Activated CD8-positive, alpha-beta T cell treated with anti-CD3 and anti-CD28 coated beads for 36 hours (primary cell): ENCODE measurements at regions of chr3 and their contacts with region 1.

Region 1: DNA sequence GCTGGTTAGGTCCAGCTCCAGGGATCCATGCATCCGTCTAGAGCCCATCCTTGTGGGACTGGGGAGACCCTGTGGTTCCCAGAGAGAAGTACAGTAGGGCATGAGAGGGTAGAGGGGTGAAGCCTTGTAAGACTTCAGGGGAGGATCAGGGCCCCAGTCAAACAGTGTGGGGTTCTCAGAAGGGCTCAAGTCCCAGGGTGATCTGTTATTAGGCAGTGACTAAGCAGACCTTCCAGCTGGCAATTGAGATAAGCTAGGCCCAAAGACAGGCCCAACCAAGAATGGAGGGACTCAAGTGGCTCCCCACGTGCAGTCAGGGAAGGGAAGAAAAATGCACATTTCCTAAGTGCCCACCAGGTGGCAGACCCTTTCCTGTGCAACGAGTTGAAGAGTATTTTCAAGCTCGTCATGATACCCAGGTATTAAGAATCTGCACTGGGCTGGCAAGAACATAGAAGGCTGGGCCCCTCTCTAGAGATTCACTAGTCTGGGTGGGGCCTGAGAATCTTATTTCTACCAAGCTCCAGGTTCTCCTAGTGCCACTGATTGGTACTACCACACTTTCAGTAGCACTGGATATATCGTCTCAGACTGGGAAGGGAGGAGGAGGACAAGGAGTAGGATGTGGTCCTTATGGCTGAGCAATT is 240.8 kb downstream of the NR1D2 start:
- DNase-seq: peak; percentile 49
- ATAC-seq: peak; percentile 86
- H3K4me3 Mint-ChIP-seq: no peak overlapping the region
- H3K27ac Mint-ChIP-seq: no peak overlapping the region
- H3K4me1 Mint-ChIP-seq: no peaks in the 10 kb centered on the region
- H3K27me3 Mint-ChIP-seq: peaks cover 2% of the 10 kb centered on the region
- CTCF ChIP-seq: peak; percentile 72

Region 2: DNA sequence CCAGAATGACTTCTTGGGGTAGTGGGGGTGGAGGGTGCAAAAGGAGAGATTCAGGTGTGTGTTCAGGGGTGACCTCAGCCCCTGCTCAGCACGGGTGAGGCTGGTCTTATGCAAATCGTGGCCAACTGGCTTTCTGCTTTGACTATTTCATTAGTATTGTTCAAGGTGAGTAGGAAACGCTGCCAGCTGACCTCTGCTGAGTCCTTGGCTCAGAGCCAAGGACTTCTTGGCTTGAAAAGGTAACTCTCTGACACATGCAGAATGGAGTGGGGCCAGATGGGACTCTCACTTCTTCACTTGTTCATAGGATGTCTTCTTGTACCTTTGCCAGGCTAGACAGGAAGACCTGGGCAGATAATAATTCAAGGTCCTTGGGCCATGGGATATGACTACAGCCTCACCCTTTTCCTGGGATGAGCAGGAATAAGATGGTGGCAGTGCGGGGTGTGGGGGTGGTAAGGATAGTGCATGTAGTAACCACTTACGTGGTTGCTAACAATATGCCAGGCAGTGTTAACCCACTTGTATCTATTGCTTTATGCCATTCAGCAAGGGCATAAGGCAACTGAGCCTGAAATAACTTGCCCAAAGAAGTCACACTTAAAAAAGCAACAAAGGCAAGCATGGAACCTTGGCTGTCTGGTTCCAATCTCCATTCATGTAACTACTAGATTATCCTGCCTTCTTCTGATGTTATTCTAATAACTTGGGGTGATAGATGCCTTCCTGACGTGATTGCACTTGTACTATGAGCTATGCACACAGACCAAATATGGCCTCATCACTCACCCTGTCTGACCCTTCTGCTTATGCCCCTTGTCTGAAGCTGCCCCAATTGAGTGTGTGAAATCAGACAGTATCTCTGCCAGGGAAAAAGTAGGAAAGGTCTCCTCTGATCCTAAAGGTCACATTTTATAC is 47.6 kb before region 1 on chr3:
- CTCF ChIA-PET with region 1: no interaction called
- POLR2A ChIA-PET with region 1: no interaction called
- intact Hi-C with region 1: no loop called
- DNase-seq: no peak
- ATAC-seq: no peak
- H3K4me3 Mint-ChIP-seq: no peak overlapping the region
- H3K27ac Mint-ChIP-seq: no peak overlapping the region
- H3K4me1 Mint-ChIP-seq: peaks cover 2% of the 10 kb centered on the region
- H3K27me3 Mint-ChIP-seq: no peaks in the 10 kb centered on the region
- CTCF ChIP-seq: no peak

Region 3: DNA sequence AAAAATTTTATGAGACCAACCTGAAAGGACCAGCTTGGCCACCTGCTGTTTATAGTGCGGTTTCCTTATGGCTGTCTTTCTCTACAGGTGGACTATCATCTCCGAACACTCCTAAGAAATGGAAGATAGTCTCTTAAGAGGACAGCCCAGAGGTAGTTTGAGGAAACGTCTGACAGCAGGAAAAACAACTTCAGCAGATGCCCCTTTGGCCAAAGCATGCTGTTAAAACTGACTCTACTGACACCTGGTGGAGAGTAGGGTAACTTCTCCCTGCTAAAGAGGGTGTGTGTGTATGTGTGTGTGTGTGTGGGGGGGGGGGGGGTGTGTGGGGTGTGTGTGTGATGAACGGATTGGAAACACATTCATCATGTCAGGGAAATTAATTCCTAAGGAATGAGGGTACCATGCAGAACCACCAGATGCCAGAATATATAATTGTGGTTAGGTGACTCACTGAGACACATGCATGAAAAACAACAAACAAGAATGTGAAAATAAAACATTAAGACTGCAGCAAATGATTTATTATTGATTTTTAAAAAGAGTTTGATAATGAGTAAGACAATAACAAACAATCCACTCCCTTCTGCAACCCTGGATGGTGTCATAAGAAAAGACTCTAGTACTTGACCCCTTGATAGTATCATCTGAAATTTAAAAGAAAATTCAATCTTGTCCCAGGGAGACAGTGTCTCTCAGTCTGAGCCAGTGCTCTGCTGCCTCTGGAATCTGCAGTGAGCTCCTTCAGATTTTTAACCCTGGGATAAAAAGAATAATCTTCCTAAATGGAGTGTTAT is 52.3 kb after region 1 on chr3:
- CTCF ChIA-PET with region 1: interaction called, 16 read pairs
- POLR2A ChIA-PET with region 1: no interaction called
- intact Hi-C with region 1: no loop called
- DNase-seq: peak; percentile 42
- ATAC-seq: peak; percentile 93
- H3K4me3 Mint-ChIP-seq: no peak overlapping the region
- H3K27ac Mint-ChIP-seq: no peak overlapping the region
- H3K4me1 Mint-ChIP-seq: no peaks in the 10 kb centered on the region
- H3K27me3 Mint-ChIP-seq: no peaks in the 10 kb centered on the region
- CTCF ChIP-seq: peak; percentile 47

Region 4: GRCh38 chr3:24264748-24265158 is 78.9 kb after region 1 on chr3:
- CTCF ChIA-PET with region 1: no interaction called
- POLR2A ChIA-PET with region 1: no interaction called
- intact Hi-C with region 1: no loop called
- DNase-seq: peak; percentile 20
- ATAC-seq: no peak
- H3K4me3 Mint-ChIP-seq: no peak overlapping the region
- H3K27ac Mint-ChIP-seq: no peak overlapping the region
- H3K4me1 Mint-ChIP-seq: no peaks in the 10 kb centered on the region
- H3K27me3 Mint-ChIP-seq: peaks cover 7% of the 10 kb centered on the region
- CTCF ChIP-seq: peak; percentile 77